ENCODE measurements at regions of chr10 and their contacts with region 1.

Region 1: DNA sequence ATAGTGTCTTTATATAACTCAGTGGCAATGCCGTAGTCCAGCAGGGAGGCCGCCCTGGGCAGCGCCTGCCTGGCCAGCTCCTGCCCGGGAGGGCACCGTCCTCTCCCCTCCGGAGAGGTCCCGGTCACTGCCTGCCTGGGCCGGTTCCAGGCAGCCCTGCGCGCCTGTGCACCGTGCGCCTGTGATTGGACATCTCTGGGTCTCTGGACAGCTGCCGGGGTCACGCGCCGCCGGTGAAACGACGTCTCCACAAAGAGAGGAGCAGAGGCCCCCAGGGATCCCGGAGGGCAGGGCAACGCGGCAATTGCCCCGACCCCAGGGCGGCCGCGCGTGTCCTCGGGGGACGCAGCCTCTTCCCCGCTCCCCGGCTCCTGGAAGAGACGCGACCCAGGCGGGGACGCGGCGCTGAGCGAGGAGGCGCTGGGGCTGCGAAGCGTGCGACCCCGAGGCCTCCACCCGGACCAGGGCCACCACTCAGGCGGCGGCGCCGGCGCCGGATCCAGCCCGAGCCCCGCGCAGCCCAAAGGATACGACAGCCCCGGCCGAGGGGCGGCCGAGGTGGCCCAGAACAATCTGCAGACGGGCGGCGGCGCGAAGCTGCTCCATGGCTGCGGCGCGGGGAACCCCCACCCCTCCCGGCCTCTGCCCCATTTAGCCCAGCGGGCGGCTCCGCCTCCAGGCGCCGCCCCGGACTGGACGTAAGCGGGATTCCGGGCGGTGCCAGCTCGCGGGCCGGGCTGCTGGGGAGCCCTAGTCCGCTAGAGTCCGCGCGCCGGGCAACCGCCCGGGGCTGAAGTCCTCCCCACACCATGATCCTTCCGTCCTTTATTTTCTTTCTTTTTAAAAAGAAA is at the start of gene PHYH:
- DNase-seq: peak; percentile 94
- ATAC-seq: peak; percentile 95
- total RNA-seq, gene PHYH: 177 TPM

Region 2: GRCh38 chr10:13099666-13100348 is 199.9 kb before region 1 on chr10 and contains the start of gene OPTN:
- intact Hi-C with region 1: loop called (anchors 5 kb)
- DNase-seq: peak; percentile 85
- ATAC-seq: peak; percentile 91
- total RNA-seq, gene OPTN: 146 TPM

Region 3: DNA sequence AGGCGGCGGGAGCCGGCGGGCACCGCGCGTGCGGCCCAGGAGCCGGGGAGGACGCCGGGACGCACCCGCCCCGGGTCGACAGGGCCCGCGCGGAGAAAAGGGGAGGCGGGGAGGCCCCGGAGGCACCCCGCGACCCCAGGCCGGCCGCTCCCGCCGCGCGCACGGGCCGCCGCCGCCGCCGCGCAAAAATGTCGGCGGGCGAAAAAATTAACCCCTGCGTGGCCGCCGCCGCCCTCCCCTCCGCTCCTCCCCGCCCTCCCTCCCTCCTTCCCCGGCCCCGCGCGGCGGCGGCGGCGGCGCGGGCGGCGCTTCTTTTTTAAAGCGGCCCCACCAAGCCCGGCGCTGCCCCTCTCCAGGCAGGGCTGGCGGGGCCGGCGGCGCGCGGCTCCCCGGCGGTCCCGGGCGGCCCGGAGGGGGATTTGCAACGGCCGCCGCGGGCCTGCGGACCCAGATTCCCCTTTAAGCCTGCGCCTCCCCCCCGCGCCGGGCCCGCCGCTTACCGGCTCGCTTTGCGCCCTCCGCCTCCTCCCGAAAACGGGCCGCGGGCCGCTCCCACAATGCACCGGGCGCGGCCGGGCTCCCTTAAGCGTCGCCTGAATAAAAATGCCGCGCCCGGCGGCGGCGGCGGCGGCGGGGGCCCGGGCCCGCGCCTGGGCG is 48.0 kb after region 1 on chr10:
- intact Hi-C with region 1: loop called (anchors 2 kb)
- DNase-seq: peak; percentile 91
- ATAC-seq: peak; percentile 78

Measured in Right ventricle myocardium inferior (tissue), 1 donor.